ENCODE measurements at regions of chr11 and their contacts with region 1.

Region 1: GRCh38 chr11:66111158-66111557 is 41.1 kb downstream of the PACS1 start:
- DNase-seq: no peak
- H3K4me3 ChIP-seq: no peak overlapping the region
- H3K27ac ChIP-seq: no peak overlapping the region
- H3K4me1 ChIP-seq: peaks cover 0 to 11% of the 10 kb centered on the region in 2 donors
- H3K27me3 ChIP-seq: no peaks in the 10 kb centered on the region
- CTCF ChIP-seq: no peak
- POLR2A ChIP-seq: no peak

Region 2: DNA sequence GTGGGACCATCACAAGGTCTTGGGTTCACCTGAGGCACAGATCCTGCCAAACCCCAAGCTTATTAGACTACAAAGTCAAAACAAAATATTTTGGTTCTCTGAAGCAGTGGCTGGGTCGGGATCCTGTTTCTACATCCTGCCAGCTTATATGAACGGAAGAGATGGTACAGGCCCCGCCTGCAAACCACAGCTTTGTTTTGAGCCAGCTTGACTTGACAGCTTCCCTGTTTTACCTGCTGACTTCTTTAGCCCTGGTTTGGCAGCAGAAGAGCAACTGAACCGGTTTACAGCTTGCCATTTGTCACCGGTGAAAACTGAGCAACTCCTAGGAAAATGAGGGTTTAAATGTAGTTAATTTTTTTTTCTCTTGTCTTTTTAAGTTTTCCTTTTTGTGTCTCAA is 29.7 kb before region 1 on chr11:
- intact Hi-C with region 1: no loop called
- DNase-seq: peak; percentile 74 to 91
- H3K4me3 ChIP-seq: peak overlapping the region in 1 of 3 donors; percentile 36
- H3K27ac ChIP-seq: peak overlapping the region; percentile 84 to 87
- H3K4me1 ChIP-seq: peaks cover 0 to 19% of the 10 kb centered on the region in 2 donors
- H3K27me3 ChIP-seq: no peaks in the 10 kb centered on the region
- CTCF ChIP-seq: no peak
- POLR2A ChIP-seq: no peak

Region 3: GRCh38 chr11:66188580-66188979 is 77.4 kb after region 1 on chr11:
- intact Hi-C with region 1: loop called (anchors 2 kb)
- DNase-seq: no peak
- H3K4me3 ChIP-seq: no peak overlapping the region
- H3K27ac ChIP-seq: no peak overlapping the region
- H3K4me1 ChIP-seq: no peaks in the 10 kb centered on the region
- H3K27me3 ChIP-seq: no peaks in the 10 kb centered on the region
- CTCF ChIP-seq: no peak
- POLR2A ChIP-seq: no peak